BJ (cell line): ENCODE measurements at regions of chr15 and their contacts with region 1.

Region 1: GRCh38 chr15:79380755-79381497 is 51.2 kb upstream of the MINAR1 start:
- DNase-seq: peak; percentile 9
- H3K4me3 ChIP-seq: no peak overlapping the region
- H3K27me3 ChIP-seq: no peaks in the 10 kb centered on the region
- CTCF ChIP-seq: peak; percentile 89

Region 2: GRCh38 chr15:79339564-79340314 is 41.2 kb before region 1 on chr15:
- CTCF ChIA-PET with region 1: interaction called, 22 read pairs
- POLR2A ChIA-PET with region 1: interaction called, 3 read pairs
- DNase-seq: peak; percentile 16
- H3K4me3 ChIP-seq: no peak overlapping the region
- H3K27me3 ChIP-seq: no peaks in the 10 kb centered on the region
- CTCF ChIP-seq: peak; percentile 91

Region 3: DNA sequence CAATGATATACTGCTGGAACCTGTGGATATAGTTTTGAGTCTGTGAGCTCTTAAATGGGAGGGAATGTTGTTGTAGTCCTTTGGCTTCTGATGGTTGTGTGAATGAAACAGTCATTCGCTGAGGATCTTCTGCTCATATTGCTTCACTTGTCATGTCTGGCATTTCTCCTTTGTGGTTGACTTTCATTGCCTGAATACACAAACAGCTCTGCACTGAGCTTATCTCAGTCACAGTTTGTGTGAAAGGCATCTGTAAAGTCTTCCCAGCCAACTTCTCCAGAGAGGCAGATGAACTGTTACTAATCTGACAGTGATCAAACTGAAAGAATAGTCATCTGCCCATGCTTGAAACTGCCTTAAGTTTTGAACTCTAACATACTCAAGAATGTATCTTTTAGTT is 10.2 kb before region 1 on chr15:
- CTCF ChIA-PET with region 1: interaction called, 66 read pairs
- POLR2A ChIA-PET with region 1: no interaction called
- DNase-seq: peak; percentile 11
- H3K4me3 ChIP-seq: no peak overlapping the region
- H3K27me3 ChIP-seq: no peaks in the 10 kb centered on the region
- CTCF ChIP-seq: no peak

Region 4: DNA sequence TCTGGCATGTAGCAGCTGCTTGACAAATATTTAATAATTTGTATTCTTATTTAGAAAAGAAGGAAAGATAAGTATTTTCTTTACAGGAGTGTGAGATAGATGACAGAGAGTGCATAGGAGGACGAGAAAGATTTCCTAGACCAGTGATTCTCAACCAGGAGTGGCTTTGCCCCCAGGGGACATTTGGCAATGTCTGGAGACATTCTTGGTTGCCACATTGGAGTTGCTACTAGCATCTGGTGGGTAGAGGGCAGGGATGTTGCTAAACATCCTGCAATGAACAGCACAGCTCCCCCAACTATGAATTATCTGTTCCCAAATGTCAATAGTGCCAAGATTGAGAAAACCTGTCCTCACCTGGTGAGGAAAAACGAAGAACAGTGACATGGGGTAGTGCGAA is 20.4 kb after region 1 on chr15:
- CTCF ChIA-PET with region 1: interaction called, 11 read pairs
- POLR2A ChIA-PET with region 1: no interaction called
- DNase-seq: no peak
- H3K4me3 ChIP-seq: no peak overlapping the region
- H3K27me3 ChIP-seq: no peaks in the 10 kb centered on the region
- CTCF ChIP-seq: no peak

Region 5: GRCh38 chr15:79535536-79535935 is 154.6 kb after region 1 on chr15:
- CTCF ChIA-PET with region 1: no interaction called
- POLR2A ChIA-PET with region 1: no interaction called
- DNase-seq: no peak
- H3K4me3 ChIP-seq: no peak overlapping the region
- H3K27me3 ChIP-seq: no peaks in the 10 kb centered on the region
- CTCF ChIP-seq: no peak

Region 6: DNA sequence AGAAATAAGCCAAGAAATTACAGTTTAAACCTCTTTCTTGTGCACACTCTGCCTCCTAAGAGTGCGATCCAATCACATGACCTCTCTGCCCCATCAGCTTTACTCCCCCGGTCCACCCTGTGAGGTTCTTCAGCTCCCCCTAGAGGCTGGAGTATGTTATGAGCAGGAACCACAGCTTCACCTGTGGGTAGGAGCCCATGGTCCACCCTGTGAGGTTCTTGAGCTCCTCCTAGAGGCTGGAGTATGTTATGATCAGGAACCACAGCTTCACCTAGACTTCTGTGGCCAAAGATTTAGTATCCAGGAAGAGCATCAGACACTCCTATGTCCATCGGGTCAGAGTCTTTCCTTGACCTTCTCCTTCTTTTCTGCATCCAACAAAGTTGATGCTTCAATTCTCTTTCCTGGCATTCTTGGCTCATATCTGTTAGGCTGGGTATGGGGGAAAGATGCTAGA is 215.2 kb after region 1 on chr15:
- CTCF ChIA-PET with region 1: interaction called, 151 read pairs
- POLR2A ChIA-PET with region 1: no interaction called
- DNase-seq: peak; percentile 8
- H3K4me3 ChIP-seq: no peak overlapping the region
- H3K27me3 ChIP-seq: peaks cover 1% of the 10 kb centered on the region
- CTCF ChIP-seq: peak; percentile 82

Region 7: DNA sequence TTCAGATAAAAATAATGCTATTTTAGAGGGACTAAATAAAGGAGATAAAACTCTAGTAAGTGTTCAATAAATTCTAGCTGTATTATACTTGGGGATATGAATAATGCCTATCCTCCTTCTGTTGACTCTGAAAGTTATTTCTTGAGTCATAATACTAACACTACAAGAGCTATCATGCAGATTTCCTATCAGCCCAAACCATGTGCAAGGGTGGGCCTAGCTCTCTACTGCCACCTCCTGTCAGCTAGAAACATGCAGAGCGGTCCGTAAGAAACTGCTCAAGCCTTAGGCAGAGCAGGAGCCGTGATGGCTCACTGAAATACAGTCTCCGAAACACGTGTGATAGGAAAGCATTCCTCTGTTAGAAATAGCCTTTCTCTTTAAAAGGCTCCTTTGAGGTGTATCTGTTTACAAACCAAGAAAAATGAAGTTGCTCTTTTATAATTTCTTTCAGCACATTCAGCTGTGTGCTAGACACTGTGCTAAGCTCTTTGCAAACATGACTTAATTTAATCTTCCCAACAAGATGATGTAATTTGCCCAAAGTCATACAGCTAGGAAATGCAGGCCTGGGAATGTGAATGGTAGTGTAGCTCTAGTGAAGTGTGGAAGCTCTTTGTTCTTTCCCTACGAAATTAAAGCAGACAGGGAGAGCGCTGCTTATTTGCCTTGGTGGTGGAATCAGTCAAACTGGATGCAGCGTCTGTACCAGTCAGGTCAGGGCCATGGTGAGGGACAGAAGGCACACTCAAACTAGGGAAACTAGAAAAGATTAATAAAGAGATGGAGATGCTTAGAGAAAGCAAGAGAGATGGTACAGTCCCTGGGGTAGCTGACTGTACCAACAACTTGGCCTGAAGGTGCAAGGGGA is 472.8 kb after region 1 on chr15:
- CTCF ChIA-PET with region 1: interaction called, 244 read pairs
- POLR2A ChIA-PET with region 1: no interaction called
- DNase-seq: peak; percentile 44
- H3K4me3 ChIP-seq: no peak overlapping the region
- H3K27me3 ChIP-seq: no peaks in the 10 kb centered on the region
- CTCF ChIP-seq: peak; percentile 97